ENCODE measurements at regions of chr12 and their contacts with region 1.

Region 1: GRCh38 chr12:5898876-5899275 is 46.2 kb downstream of the ANO2 start:
- DNase-seq: peak in 1 of 2 experiments; percentile 10
- H3K4me3 ChIP-seq: no peak overlapping the region
- H3K27ac ChIP-seq: no peak overlapping the region
- H3K4me1 ChIP-seq: no peaks in the 10 kb centered on the region
- H3K27me3 ChIP-seq: no peaks in the 10 kb centered on the region
- CTCF ChIP-seq: peak; percentile 60 to 73 (median 65)
- EP300 ChIP-seq: no peak
- POLR2A ChIP-seq: no peak
- RAD21 ChIP-seq: peak; percentile 59 to 76

Region 2: DNA sequence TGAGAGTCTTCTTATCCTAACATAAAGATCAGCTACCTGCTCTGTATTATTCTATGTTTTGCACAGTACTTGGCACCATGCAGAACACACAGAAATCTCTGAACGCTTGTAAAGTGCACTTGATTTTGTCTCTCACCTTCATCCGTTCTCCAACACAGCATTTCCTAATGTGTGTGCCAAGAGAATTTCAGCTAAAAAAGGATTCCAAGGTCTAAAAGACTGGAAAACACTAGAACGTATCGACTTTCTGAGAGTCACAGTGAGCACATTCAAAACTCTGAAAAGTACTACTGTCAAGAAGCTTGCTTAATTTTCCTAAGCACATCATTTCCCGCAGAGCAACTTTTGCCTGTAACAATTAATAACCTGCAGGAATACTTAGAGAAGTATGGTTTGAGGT is 165.0 kb before region 1 on chr12:
- CTCF ChIA-PET with region 1: no interaction called
- POLR2A ChIA-PET with region 1: no interaction called
- DNase-seq: no peak
- H3K4me3 ChIP-seq: no peak overlapping the region
- H3K27ac ChIP-seq: no peak overlapping the region
- H3K4me1 ChIP-seq: no peaks in the 10 kb centered on the region
- H3K27me3 ChIP-seq: peaks cover 0 to 1% (median 0%) of the 10 kb centered on the region in 4 experiments; a peak in 1 of 7 replicates
- CTCF ChIP-seq: no peak
- EP300 ChIP-seq: no peak
- POLR2A ChIP-seq: no peak
- RAD21 ChIP-seq: no peak

Region 3: GRCh38 chr12:5840944-5841343 is 57.9 kb before region 1 on chr12:
- CTCF ChIA-PET with region 1: interaction called, 11 read pairs
- POLR2A ChIA-PET with region 1: no interaction called
- DNase-seq: no peak
- H3K4me3 ChIP-seq: no peak overlapping the region
- H3K27ac ChIP-seq: no peak overlapping the region
- H3K4me1 ChIP-seq: no peaks in the 10 kb centered on the region
- H3K27me3 ChIP-seq: no peaks in the 10 kb centered on the region; a peak in 1 of 7 replicates
- CTCF ChIP-seq: peak; percentile 30 to 49 (median 41); a peak in 3 of 4 replicates
- EP300 ChIP-seq: no peak
- POLR2A ChIP-seq: no peak
- RAD21 ChIP-seq: peak; percentile 29 to 44; a peak in 3 of 4 replicates

Region 4: DNA sequence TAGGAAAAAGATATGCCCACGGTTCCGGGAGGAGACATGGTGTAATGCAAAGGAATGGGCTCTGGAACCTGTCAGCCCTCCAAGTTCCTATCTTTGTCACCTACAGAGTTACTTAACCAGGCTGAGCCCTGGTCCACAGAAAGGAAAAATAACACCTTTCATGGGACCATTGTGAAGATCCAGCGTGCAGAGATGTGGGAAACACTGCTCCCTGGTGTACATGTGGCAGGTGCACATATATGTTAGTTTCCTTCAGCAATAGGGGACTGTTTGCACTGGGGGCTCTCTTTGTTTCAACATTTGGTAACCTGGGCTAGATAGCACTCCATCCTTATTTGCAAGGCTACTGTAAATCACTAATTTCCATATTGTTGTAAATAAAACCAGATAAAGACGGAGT is 26.1 kb before region 1 on chr12:
- CTCF ChIA-PET with region 1: interaction called, 14 read pairs
- POLR2A ChIA-PET with region 1: no interaction called
- DNase-seq: no peak
- H3K4me3 ChIP-seq: no peak overlapping the region
- H3K27ac ChIP-seq: no peak overlapping the region
- H3K4me1 ChIP-seq: peaks cover 0 to 15% (median 4%) of the 10 kb centered on the region in 4 experiments; a peak in 5 of 7 replicates
- H3K27me3 ChIP-seq: no peaks in the 10 kb centered on the region
- CTCF ChIP-seq: peak; percentile 17 to 45 (median 17); a peak in 3 of 4 replicates
- EP300 ChIP-seq: no peak
- POLR2A ChIP-seq: no peak
- RAD21 ChIP-seq: peak; percentile 53 to 58

Region 5: DNA sequence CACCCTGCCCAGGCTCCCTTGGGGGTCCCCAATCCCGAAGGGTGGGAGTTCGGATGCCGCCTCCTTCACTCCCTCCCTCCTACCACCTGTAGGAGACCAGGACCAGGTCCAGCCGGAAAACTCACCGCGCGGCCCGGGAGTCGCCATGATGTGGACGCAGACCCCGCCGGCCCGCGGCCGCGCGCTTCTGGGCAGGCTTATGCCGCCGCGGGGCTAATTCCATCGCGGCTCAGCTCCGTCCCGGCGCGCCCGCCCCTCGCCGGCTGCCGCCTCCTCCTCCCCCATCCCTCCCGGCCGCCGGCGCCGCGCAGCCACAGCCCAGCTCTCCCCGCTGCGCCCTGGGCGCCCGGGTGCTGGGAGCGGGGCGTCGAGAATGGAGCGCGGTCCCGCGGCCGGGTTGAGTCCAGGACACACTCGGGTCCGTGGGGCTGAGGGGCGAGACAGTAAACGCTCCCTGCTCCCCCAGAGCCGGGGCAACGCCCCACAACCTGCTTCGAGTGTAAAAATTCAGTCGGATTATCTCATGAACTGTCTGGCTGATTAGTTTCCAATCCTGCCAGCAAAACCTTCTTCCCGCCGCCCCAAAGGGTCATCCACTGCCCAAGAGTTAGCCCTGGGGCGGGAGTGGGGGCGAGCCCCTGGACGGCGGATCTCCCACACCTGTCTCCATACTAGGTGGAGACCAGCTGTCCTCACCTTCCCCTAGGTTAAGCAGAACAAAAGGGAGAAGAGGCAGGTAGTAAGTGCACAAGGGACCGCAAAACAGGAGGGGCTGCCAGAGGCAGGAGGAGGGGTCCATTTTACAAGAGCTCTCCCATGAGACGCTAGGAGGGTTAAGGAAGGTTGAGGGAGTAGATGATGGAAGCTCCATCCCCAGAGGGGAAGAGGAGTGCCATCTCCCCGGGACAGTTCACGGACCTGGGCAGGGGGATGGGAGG is 46.5 kb after region 1 on chr12 and contains the start of gene ANO2:
- CTCF ChIA-PET with region 1: no interaction called
- POLR2A ChIA-PET with region 1: no interaction called
- DNase-seq: peak in 1 of 2 experiments; percentile 71
- H3K4me3 ChIP-seq: peak within 1 kb of the TSS; percentile 64 to 91 (median 82)
- H3K27ac ChIP-seq: no peak within 1 kb of the TSS
- H3K4me1 ChIP-seq: peaks cover 0 to 5% (median 2%) of the 10 kb centered on the region in 4 experiments; a peak in 4 of 7 replicates
- H3K27me3 ChIP-seq: peaks cover 4 to 23% (median 10%) of the 10 kb centered on the region in 4 experiments; a peak in 5 of 7 replicates
- CTCF ChIP-seq: no peak
- EP300 ChIP-seq: no peak
- POLR2A ChIP-seq: peak; percentile 62 to 74
- RAD21 ChIP-seq: no peak
- total RNA-seq, gene ANO2: 3.5 and 5.5 TPM in 2 replicates

Region 6: DNA sequence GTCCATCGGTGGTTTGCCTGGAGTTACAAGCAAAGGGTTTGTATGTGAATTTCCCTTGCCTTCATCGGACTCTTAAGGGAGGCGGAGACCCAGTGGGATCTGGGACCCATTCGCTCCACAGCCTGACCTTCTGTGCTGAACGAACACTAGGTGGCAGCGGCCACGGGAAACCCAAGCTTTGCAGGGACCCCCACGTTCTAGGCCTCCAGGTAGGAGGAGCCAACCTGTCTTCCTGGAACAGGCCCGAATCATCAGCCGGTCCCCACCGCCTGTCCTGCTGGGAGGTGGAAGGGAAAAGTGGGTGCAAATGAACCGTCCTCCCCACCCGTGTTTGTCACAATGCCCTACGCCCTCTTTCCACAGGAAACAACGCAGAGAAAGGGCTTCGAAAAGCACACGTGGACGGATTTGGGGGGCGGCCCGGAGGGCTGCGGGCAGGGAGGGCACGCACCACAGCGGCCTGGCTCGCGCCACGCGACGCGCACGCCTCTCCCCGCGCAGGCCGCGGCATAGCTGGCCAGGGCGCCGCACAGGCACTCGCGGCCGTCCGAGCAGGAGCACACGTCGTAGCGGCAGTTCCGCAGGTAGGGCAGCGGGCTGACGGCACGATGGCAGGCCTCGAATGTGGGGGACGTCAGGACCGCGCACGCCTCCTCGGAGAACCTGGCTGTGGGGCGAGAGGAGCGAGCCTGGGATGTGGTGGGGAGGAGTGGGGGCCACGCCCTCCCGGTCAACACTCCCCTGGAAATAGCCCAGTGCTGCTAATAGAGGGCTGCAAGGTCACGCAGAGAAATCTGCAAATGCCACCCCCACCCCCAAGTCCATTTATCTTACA is 157.7 kb after region 1 on chr12:
- CTCF ChIA-PET with region 1: no interaction called
- POLR2A ChIA-PET with region 1: no interaction called
- DNase-seq: peak; percentile 33 to 63
- H3K4me3 ChIP-seq: peak overlapping the region; percentile 38 to 62 (median 40)
- H3K27ac ChIP-seq: no peak overlapping the region
- H3K4me1 ChIP-seq: peaks cover 7 to 18% (median 16%) of the 10 kb centered on the region in 4 experiments
- H3K27me3 ChIP-seq: peaks cover 0 to 16% (median 10%) of the 10 kb centered on the region in 4 experiments; a peak in 5 of 7 replicates
- CTCF ChIP-seq: peak; percentile 58 to 66 (median 60)
- EP300 ChIP-seq: no peak
- POLR2A ChIP-seq: no peak
- RAD21 ChIP-seq: peak; percentile 25 to 56; a peak in 3 of 4 replicates

Measured in H1 (cell line).